Esophagus squamous epithelium (tissue), 5 donors: ENCODE measurements at regions of chr2 and their contacts with region 1.

Region 1: DNA sequence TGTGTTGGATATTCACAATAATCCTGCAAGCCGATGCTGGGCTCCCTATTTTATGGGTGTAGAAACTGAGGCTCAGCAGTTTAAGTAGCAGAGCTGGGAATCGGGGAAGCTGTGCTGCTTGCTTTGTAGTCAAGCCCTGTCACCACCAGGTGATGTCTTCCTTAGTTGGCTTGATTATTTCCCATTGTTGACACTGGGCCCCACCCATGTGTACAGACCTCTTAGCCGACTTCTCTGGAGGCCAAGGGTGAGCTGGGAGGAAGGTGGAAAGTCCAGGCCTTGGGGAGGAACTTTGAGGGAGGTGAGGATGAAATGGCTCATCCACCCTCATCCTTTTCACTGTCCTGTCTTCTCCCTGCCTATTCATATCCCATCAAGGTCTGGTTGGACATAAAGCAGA is 60.0 kb downstream of the CAPN13 start:
- DNase-seq: no peak
- H3K4me3 ChIP-seq: no peak overlapping the region
- H3K27ac ChIP-seq: no peak overlapping the region
- H3K4me1 ChIP-seq: no peaks in the 10 kb centered on the region
- H3K27me3 ChIP-seq: peaks cover 0 to 12% (median 0%) of the 10 kb centered on the region in 4 donors
- CTCF ChIP-seq: no peak
- POLR2A ChIP-seq: no peak

Region 2: GRCh38 chr2:30862054-30862651 is 114.9 kb after region 1 on chr2:
- intact Hi-C with region 1: loop called (anchors 10 kb)
- DNase-seq: no peak
- H3K4me3 ChIP-seq: no peak overlapping the region
- H3K27ac ChIP-seq: no peak overlapping the region
- H3K4me1 ChIP-seq: peaks cover 0 to 19% (median 7%) of the 10 kb centered on the region in 3 donors
- H3K27me3 ChIP-seq: no peaks in the 10 kb centered on the region
- CTCF ChIP-seq: peak; percentile 25 to 50 (median 46)
- POLR2A ChIP-seq: no peak